Activated T-helper 1 cell treated with anti-CD3 and anti-CD28 coated beads, Interleukin-12 subunit alpha, Interleukin-12 subunit beta, Interleukin-2, Interleukin-4 antibody, amounts not matched to agents 30 ng/mL and 10 ng/mL and 1 ng/mL, durations not matched to agents 14 hours and 24 hours and 36 hours (primary cell): ENCODE measurements at regions of chr10 and their contacts with region 1.

Region 1: DNA sequence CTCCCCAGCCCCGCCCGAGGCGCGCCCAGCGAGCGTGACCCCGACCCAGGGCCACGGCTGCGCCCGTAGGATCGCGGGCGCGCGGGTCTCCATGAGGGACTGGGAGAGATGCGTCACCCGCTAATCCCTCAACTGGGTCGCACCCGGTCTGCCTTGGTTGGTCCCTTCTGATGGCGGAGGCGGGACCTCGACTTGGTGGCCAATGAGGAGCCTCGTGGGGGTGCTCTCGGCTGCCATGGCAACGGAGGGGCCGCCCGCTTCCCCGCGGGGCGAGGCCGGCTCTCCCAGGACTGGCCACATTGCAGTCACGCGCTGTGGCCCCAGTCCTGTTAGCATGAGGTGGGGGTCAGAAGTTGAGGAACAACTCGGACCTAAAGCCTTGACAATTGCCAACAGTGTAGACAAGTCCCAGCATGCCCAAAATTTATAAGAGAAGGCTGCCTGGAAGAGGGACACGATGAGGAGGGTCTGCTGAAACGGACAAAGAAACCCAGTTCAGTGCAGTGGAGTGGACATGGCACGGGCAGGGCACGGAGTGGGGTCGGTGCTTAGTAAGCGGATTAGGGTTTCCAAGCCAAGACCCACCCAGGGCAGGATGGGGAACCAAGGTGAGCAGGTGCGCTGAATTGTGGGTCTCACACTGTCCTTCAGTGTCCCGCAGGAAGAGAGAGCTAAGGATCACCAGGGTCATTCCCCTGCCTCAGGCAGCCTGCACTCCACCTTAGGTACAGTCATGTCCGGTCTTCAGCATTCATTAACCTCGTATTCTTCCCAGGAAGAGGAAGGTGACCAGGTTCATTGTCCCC is 24.4 kb downstream of the DDIT4 start:
- DNase-seq: peak; percentile 92
- H3K4me3 Mint-ChIP-seq: peak overlapping the region; percentile 78
- H3K27ac Mint-ChIP-seq: peak overlapping the region; percentile 100
- H3K4me1 Mint-ChIP-seq: peaks cover 54% of the 10 kb centered on the region
- H3K27me3 Mint-ChIP-seq: no peaks in the 10 kb centered on the region

Region 2: DNA sequence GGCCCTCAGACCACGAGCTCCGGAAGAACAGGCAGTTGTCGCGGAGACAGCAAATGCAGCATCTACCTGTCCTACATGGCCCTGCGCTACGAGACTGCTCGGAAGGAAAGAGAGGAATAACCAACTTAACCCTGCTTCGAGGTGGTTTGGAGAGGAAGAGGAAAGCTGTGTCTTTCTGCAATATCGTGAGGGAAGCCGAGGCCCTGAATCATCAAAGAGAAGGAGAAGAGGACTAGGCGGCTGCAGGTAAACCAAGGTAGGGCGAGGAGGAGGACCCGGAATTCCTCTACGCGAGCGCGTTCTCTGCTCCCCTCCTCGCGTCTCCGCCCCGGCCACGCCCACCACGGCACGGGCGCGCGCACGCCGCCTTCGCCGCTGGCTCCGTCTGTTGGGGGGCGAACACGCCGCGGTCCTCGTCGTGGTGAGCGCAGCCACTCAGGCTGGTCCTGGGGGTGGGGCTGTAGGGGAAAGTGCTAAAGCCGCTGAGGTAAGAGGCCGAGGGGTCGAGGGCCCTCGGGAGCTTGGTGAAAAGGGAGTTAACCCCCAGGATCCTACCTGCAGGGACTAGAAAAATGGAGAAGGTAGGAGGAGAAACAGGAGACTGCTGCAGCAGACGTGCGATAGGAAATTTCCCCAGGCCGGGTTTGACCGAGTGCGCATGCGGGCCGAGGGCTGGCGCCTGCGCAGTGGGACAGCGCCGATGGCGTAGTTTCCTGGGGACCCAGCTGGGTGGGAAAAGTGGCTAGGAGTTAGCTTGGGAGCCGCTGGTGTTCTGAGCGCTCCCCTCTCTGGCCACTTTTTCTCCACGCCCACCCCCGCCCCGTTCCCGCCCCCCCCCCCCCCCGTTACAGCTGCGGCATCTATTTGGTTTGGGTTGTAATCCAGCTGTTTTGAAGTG is 82.3 kb before region 1 on chr10 and contains the starts of genes ANAPC16 and ASCC1:
- intact Hi-C with region 1: loop called (anchors 1 kb)
- DNase-seq: peak; percentile 94
- H3K4me3 Mint-ChIP-seq: peak within 1 kb of the TSS; percentile 98
- H3K27ac Mint-ChIP-seq: peak within 1 kb of the TSS; percentile 99
- H3K4me1 Mint-ChIP-seq: peaks cover 51% of the 10 kb centered on the region
- H3K27me3 Mint-ChIP-seq: peaks cover 2% of the 10 kb centered on the region
- total RNA-seq, gene ANAPC16: 80.0 and 81.6 TPM in 2 replicates
- total RNA-seq, gene ASCC1: 29.8 and 33.5 TPM in 2 replicates

Region 3: DNA sequence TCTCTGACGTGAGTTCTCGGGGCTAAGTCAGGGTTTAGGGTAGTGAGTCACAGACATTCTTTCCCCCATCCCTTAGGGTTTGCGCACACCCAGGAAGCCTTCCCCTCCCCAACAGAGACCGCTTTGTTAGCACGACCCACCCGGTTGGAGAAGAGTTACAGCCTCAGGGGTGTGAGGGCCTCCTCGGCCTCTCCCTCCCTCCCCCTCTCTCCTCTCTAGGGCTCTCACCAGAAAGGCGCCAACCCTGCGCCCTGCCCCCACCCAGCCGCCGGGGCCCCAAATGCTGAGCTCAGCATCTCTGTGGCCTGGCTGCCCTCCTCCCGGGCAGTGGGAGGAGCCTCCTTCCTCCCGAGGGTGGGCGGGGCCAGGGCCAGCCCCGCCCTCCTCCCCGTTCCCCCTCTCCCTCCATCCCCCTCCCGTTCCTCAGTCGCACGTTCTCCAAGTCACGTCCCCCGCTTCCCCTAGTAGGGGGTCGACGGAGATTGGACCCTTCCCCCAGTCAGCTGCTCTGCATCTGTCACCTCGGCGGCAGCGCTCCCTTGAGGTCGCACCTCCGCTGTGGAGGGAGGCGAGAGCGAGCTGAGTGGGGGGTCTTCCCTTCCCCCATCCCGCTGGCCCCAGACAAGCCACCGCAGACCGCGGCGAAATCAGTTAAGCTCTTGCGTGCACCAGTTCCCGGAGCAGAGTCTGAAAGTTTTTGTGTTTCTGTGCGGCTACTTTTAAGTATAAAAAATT is 37.4 kb before region 1 on chr10:
- intact Hi-C with region 1: loop called (anchors 1 kb)
- DNase-seq: peak; percentile 81
- H3K4me3 Mint-ChIP-seq: peak overlapping the region; percentile 86
- H3K27ac Mint-ChIP-seq: peak overlapping the region; percentile 98
- H3K4me1 Mint-ChIP-seq: peaks cover 67% of the 10 kb centered on the region
- H3K27me3 Mint-ChIP-seq: no peaks in the 10 kb centered on the region

Region 4: GRCh38 chr10:72319416-72320254 is 21.5 kb after region 1 on chr10:
- intact Hi-C with region 1: loop called (anchors 1 kb)
- DNase-seq: peak; percentile 84
- H3K4me3 Mint-ChIP-seq: peak overlapping the region; percentile 80
- H3K27ac Mint-ChIP-seq: peak overlapping the region; percentile 98
- H3K4me1 Mint-ChIP-seq: peaks cover 70% of the 10 kb centered on the region
- H3K27me3 Mint-ChIP-seq: no peaks in the 10 kb centered on the region

Region 5: GRCh38 chr10:72354478-72355213 is 56.5 kb after region 1 on chr10 and contains the start of gene DNAJB12:
- intact Hi-C with region 1: no loop called
- DNase-seq: peak; percentile 86
- H3K4me3 Mint-ChIP-seq: peak within 1 kb of the TSS; percentile 97
- H3K27ac Mint-ChIP-seq: peak within 1 kb of the TSS; percentile 96
- H3K4me1 Mint-ChIP-seq: peaks cover 31% of the 10 kb centered on the region
- H3K27me3 Mint-ChIP-seq: peaks cover 2% of the 10 kb centered on the region
- total RNA-seq, gene DNAJB12: 32.4 and 38.0 TPM in 2 replicates

Region 6: GRCh38 chr10:73096449-73097304 is 798.5 kb after region 1 on chr10 and contains the start of gene P4HA1:
- intact Hi-C with region 1: loop called (anchors 1 kb)
- DNase-seq: peak; percentile 97
- H3K4me3 Mint-ChIP-seq: peak within 1 kb of the TSS; percentile 96
- H3K27ac Mint-ChIP-seq: peak within 1 kb of the TSS; percentile 94
- H3K4me1 Mint-ChIP-seq: peaks cover 46% of the 10 kb centered on the region
- H3K27me3 Mint-ChIP-seq: peaks cover 2% of the 10 kb centered on the region
- total RNA-seq, gene P4HA1: 52.8 and 54.5 TPM in 2 replicates